Mammary epithelial cell (primary cell): ENCODE measurements at regions of chr14 and their contacts with region 1.

Region 1: GRCh38 chr14:104078031-104078455 is 7.5 kb upstream of the ASPG start:
- DNase-seq: peak; percentile 78
- H3K4me3 ChIP-seq: no peak overlapping the region
- H3K27ac ChIP-seq: no peak overlapping the region
- H3K4me1 ChIP-seq: no peaks in the 10 kb centered on the region
- H3K27me3 ChIP-seq: no peaks in the 10 kb centered on the region
- CTCF ChIP-seq: peak; percentile 100

Region 2: DNA sequence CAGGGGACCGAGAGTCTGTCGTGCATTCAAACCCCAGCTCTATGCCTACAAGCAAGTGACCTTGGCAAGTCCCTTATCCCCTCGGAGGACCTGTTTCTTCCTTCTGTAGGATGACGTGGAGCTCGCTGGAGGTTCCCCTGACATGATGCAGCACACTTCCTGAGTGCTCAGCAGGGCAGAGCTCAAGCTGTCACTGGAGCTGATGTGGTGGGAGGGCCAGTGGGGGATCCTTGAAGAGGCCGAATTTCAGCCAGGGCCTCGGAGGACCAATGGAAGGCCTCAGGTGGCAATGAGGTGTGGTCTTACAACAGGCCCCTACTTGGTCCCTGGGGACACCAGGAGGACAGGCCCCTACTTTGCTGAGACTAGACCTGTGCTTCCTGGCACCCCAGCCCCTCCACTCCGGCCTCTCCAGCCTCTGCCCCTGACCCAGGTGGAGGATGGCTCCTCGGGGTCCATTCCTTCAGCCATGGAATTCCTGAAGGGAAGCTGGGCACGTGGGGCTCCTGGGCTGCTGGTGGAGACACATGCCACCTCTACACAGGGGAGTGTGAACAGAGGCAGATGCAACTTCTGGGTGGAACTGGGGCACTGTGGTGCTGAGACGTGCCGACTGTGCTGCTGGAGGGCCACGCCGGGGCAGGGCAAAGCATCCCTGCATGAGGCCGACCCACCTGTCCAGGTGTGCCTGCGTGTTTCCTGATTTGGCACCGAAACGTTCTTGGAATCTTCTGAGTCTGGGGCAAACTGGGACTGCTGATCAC is 41.6 kb after region 1 on chr14:
- CTCF ChIA-PET with region 1: no interaction called
- dilution Hi-C with region 1: no loop called
- in situ Hi-C with region 1: loop called in 1 of 2 experiments (anchors 10 kb)
- intact Hi-C with region 1: no loop called
- DNase-seq: no peak
- H3K4me3 ChIP-seq: no peak overlapping the region
- H3K27ac ChIP-seq: no peak overlapping the region
- H3K4me1 ChIP-seq: peaks cover 19% of the 10 kb centered on the region
- H3K27me3 ChIP-seq: peaks cover 14% of the 10 kb centered on the region
- CTCF ChIP-seq: no peak

Region 3: GRCh38 chr14:104130974-104131651 is 53.1 kb after region 1 on chr14:
- CTCF ChIA-PET with region 1: interaction called, 3 read pairs
- dilution Hi-C with region 1: no loop called
- in situ Hi-C with region 1: loop called (anchors 5 to 10 kb)
- intact Hi-C with region 1: loop called (anchors 1 kb)
- DNase-seq: no peak
- H3K4me3 ChIP-seq: no peak overlapping the region
- H3K27ac ChIP-seq: no peak overlapping the region
- H3K4me1 ChIP-seq: no peaks in the 10 kb centered on the region
- H3K27me3 ChIP-seq: peaks cover 18% of the 10 kb centered on the region
- CTCF ChIP-seq: peak; percentile 71 to 83

Region 4: GRCh38 chr14:104639889-104640548 is 562.0 kb after region 1 on chr14:
- CTCF ChIA-PET with region 1: no interaction called
- dilution Hi-C with region 1: no loop called
- in situ Hi-C with region 1: no loop called
- intact Hi-C with region 1: loop called (anchors 1 kb)
- DNase-seq: peak; percentile 30
- H3K4me3 ChIP-seq: no peak overlapping the region
- H3K27ac ChIP-seq: no peak overlapping the region
- H3K4me1 ChIP-seq: peaks cover 4% of the 10 kb centered on the region
- H3K27me3 ChIP-seq: no peaks in the 10 kb centered on the region
- CTCF ChIP-seq: peak; percentile 85 to 95